PC-3 (cell line): ENCODE measurements at regions of chr19 and their contacts with region 1.

Region 1: DNA sequence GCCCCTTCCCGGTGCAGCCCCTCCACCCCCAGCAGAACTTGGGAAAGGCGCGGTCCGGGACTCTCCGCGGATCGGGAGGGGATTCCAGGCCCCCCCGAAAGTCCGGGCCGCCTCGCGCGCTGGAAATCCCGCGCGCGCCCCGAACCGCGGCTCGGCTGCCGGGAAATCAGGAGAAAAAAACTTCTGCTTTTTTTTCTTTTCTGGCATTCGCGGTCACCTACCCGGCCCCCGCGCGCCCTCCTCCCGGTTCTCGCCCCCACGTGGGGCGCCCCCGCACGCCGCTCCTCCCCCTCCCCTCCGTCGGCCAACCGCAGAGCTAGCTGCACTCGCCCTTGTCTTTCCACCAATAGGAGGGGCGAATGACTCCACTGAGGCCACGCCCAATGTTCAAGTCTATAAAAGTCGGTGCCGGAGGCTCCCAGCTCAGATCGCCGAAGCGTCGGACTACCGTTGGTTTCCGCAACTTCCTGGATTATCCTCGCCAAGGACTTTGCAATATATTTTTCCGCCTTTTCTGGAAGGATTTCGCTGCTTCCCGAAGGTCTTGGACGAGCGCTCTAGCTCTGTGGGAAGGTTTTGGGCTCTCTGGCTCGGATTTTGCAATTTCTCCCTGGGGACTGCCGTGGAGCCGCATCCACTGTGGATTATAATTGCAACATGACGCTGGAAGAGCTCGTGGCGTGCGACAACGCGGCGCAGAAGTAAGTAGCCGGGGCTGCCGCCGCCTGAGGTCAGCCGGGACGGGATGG is at the start of gene GADD45B:
- DNase-seq: peak; percentile 95
- ATAC-seq: peak; percentile 27
- H3K4me3 ChIP-seq: peak within 1 kb of the TSS; percentile 100
- H3K27ac ChIP-seq: peak within 1 kb of the TSS; percentile 64
- H3K4me1 ChIP-seq: peaks cover 5% of the 10 kb centered on the region; the same call in 1 of the 2 replicates
- H3K27me3 ChIP-seq: no peaks in the 10 kb centered on the region
- CTCF ChIP-seq: no peak
- total RNA-seq, gene GADD45B: 137 and 154 TPM in 2 replicates

Region 2: DNA sequence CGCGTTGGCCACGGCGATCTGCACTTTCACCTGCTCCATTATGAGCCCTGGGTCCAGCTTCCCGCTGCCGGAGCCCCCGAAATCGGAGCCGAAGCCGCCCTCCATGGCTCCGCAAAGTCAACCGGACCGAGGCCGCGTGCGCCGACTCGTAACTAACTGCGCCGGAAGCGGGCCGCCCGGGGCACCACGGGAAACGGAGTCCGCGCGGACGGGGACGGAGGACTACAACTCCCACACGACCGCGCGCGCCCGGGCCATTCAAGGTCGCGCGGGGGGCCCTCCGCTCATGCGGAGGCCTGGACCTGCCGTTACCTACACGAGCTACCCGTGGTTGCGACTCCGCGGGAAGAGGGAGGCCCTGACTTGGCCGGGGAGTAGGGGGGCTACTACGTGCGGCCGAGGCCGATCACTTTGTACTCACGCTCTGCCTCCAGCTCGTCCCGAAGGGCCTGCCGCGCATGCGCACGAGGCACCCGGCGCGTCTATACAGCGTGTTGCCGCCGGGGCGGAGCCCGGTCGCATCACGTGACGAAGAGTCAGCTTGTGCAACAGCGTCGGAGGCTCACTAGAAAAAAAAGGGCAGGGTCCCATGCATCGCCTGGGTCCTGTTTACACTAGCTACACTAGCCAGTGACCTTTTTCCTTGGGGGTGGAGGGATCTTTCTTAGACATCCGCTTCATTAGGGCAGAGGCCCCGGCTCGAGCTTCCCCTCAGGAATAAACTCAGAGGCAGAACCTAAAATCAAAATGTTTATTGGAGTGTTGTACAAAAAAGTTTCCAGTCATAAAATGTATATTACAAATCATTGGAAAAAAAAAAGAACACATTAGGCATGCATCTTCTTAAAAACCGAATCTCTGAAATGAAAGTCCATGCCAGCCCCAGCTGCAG is 48.2 kb before region 1 on chr19 and contains the start of gene TIMM13:
- CTCF ChIA-PET with region 1: no interaction called
- POLR2A ChIA-PET with region 1: no interaction called
- intact Hi-C with region 1: no loop called
- DNase-seq: peak; percentile 93
- ATAC-seq: peak; percentile 80
- H3K4me3 ChIP-seq: peak within 1 kb of the TSS; percentile 97
- H3K27ac ChIP-seq: peak within 1 kb of the TSS; percentile 96
- H3K4me1 ChIP-seq: peaks cover 12% of the 10 kb centered on the region; the same call in 1 of the 2 replicates
- H3K27me3 ChIP-seq: no peaks in the 10 kb centered on the region
- CTCF ChIP-seq: no peak
- total RNA-seq, gene TIMM13: 129 and 131 TPM in 2 replicates

Region 3: GRCh38 chr19:2523630-2524311 is 47.9 kb after region 1 on chr19:
- CTCF ChIA-PET with region 1: no interaction called
- POLR2A ChIA-PET with region 1: no interaction called
- intact Hi-C with region 1: no loop called
- DNase-seq: no peak
- ATAC-seq: no peak
- H3K4me3 ChIP-seq: no peak overlapping the region
- H3K27ac ChIP-seq: no peak overlapping the region
- H3K4me1 ChIP-seq: peaks cover 17% of the 10 kb centered on the region
- H3K27me3 ChIP-seq: no peaks in the 10 kb centered on the region
- CTCF ChIP-seq: no peak

Region 4: GRCh38 chr19:2543463-2544442 is 67.9 kb after region 1 on chr19:
- CTCF ChIA-PET with region 1: interaction called, 4 read pairs
- POLR2A ChIA-PET with region 1: interaction called, 20 read pairs
- intact Hi-C with region 1: loop called (anchors 1 kb)
- DNase-seq: peak; percentile 94
- ATAC-seq: peak; percentile 79
- H3K4me3 ChIP-seq: peak overlapping the region; percentile 54
- H3K27ac ChIP-seq: peak overlapping the region; percentile 88
- H3K4me1 ChIP-seq: peaks cover 47% of the 10 kb centered on the region
- H3K27me3 ChIP-seq: no peaks in the 10 kb centered on the region
- CTCF ChIP-seq: peak; percentile 35; the same call in 1 of the 2 replicates

Region 5: GRCh38 chr19:2570394-2570825 is 94.5 kb after region 1 on chr19:
- CTCF ChIA-PET with region 1: interaction called, 10 read pairs
- POLR2A ChIA-PET with region 1: no interaction called
- intact Hi-C with region 1: no loop called
- DNase-seq: no peak
- ATAC-seq: no peak
- H3K4me3 ChIP-seq: no peak overlapping the region
- H3K27ac ChIP-seq: no peak overlapping the region
- H3K4me1 ChIP-seq: no peaks in the 10 kb centered on the region
- H3K27me3 ChIP-seq: no peaks in the 10 kb centered on the region
- CTCF ChIP-seq: no peak

Region 6: GRCh38 chr19:2610637-2611482 is 135.0 kb after region 1 on chr19:
- CTCF ChIA-PET with region 1: interaction called, 6 read pairs
- POLR2A ChIA-PET with region 1: interaction called, 4 read pairs
- intact Hi-C with region 1: loop called (anchors 1 kb)
- DNase-seq: peak; percentile 88
- ATAC-seq: peak; percentile 92
- H3K4me3 ChIP-seq: peak overlapping the region; percentile 65
- H3K27ac ChIP-seq: no peak overlapping the region
- H3K4me1 ChIP-seq: no peaks in the 10 kb centered on the region
- H3K27me3 ChIP-seq: no peaks in the 10 kb centered on the region
- CTCF ChIP-seq: peak; percentile 84

Region 7: DNA sequence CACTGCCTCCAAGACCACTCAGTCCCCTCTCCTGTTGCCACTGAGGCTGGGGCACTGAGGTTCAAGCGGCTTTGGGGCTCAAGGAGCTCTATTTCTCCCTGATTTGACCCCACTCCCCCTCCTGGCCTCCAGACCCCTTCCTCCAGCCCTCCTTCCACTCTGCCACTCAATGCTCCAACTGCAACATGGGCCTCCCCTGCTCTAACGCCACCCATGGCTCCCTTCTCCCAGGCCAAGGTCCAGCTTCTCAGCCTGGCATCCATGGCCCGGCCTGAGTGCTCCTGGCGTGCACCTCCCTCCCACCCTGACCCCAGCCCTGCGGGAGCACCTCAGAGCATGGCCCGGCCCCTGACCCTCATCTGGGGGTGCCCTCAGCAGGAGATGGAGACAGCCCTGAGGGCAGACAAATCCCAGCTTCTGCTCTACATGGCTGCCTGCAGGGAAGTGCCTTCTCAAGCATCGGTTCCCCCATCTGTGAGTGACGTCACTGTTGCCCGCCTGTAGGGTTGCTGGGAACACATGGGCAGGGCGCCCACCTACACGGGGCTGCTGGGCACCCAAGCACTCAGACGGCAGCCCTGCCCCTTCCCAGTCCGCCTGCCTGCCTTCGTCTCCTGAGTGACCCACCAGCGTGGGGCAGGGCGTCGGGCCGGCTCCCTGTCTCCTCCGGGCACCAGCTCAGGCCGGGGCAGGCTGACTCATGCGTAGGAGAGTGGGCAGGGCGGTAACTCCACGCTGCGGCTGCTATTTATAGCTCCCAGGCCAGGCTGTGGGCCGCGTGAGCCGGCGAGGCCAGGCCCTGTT is 246.9 kb after region 1 on chr19:
- CTCF ChIA-PET with region 1: no interaction called
- POLR2A ChIA-PET with region 1: interaction called, 18 read pairs
- intact Hi-C with region 1: no loop called
- DNase-seq: peak; percentile 54
- ATAC-seq: peak; percentile 87
- H3K4me3 ChIP-seq: no peak overlapping the region
- H3K27ac ChIP-seq: no peak overlapping the region
- H3K4me1 ChIP-seq: peaks cover 20% of the 10 kb centered on the region
- H3K27me3 ChIP-seq: no peaks in the 10 kb centered on the region
- CTCF ChIP-seq: no peak